Kidney (tissue), 22 donors: ENCODE measurements at regions of chr19 and their contacts with region 1.

Region 1: DNA sequence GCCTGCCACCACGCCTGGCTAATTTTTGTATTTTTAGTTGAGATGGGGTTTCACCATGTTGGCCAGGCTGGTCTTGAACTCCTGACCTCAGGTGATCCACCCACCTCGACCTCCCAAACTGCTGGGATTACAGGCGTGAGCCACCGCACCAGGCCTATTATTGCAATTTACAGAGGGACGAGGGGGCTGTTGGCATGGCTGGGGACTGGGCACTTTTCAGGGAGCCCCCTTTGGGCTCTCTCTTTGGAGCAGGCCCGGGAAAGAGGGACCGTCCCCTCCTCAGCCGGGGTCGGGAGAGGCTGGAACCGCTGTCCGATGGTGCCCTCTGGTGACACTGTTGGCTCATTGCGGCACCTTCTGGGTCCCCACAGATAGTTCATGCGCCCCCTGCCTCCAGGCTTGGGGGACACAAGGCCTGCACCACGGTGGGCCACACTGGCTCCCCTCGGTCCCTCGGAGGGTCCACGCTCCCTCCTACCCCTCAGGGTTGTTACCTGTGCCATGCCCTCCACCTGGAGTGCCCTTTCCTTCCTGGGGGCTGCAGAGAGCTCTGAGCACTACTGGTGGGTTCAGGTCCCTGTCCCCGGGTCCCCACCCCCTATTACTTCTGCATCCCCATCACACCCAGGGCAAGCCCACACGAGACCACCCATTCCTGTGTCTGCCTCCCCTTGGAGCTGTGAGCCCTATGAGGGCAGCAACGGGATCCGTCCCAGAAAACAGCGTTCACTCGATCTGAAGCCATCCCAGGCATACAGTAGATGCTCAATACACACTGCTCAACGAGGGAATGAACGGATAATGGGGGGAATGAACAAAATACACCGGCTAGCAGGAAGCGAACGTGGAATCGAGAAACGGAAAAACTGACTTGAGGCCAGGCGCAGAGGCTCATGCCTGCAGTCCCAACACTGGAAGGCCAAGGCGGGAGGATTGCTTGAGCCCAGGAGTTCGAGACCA is 12.5 kb downstream of the FEM1A start:
- DNase-seq: peak; percentile 69 to 80 (median 76)
- H3K4me3 ChIP-seq: no peak overlapping the region
- H3K27ac ChIP-seq: no peak overlapping the region
- H3K4me1 ChIP-seq: no peaks in the 10 kb centered on the region
- H3K27me3 ChIP-seq: no peaks in the 10 kb centered on the region
- CTCF ChIP-seq: peak; percentile 61

Region 2: GRCh38 chr19:4851551-4852290 is 47.7 kb after region 1 on chr19:
- intact Hi-C with region 1: loop called (anchors 5 kb)
- DNase-seq: peak; percentile 93 to 96 (median 95)
- H3K4me3 ChIP-seq: no peak overlapping the region
- H3K27ac ChIP-seq: peak overlapping the region; percentile 13 to 37
- H3K4me1 ChIP-seq: peaks cover 0 to 6% (median 0%) of the 10 kb centered on the region in 3 donors
- H3K27me3 ChIP-seq: no peaks in the 10 kb centered on the region
- CTCF ChIP-seq: peak; percentile 93

Region 3: GRCh38 chr19:4867534-4868285 is 63.7 kb after region 1 on chr19 and contains the start of gene PLIN3:
- intact Hi-C with region 1: no loop called
- DNase-seq: peak; percentile 95 to 99 (median 98)
- H3K4me3 ChIP-seq: peak within 1 kb of the TSS; percentile 58 to 71 (median 68)
- H3K27ac ChIP-seq: peak within 1 kb of the TSS; percentile 41 to 55
- H3K4me1 ChIP-seq: peaks cover 0 to 8% (median 8%) of the 10 kb centered on the region in 3 donors
- H3K27me3 ChIP-seq: no peaks in the 10 kb centered on the region
- CTCF ChIP-seq: no peak
- total RNA-seq, gene PLIN3: 60.0 TPM